ENCODE measurements at regions of chr5 and their contacts with region 1.

Region 1: GRCh38 chr5:69166686-69167492 is at the start of gene CCNB1:
- DNase-seq: peak; percentile 97 to 99
- ATAC-seq: peak; percentile 100
- H3K4me3 ChIP-seq: peak within 1 kb of the TSS; percentile 77
- H3K27ac ChIP-seq: peak within 1 kb of the TSS; percentile 62
- H3K4me1 ChIP-seq: peaks cover 7% of the 10 kb centered on the region
- H3K27me3 ChIP-seq: no peaks in the 10 kb centered on the region
- CTCF ChIP-seq: no peak
- total RNA-seq, gene CCNB1: 1.8 to 4.1 (median 2.3) TPM

Region 2: DNA sequence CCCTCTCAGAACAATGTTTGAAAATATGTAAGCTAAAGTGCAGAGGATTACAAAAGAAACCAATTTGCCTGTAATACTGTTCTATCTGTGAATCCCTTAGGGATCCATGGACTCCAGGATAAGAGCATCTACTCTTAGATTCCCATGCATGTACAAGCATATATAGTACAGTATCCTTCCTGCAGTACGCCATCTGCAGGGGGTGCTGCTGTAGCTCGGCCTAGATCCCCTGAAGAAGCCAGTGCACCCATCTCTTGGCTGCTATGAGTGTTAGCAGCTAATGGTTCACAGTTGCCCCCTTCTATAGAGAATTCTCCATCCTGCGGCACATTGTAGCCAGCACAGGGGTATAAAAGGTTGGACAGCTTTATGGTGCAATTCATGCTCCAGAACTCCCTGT is 134.9 kb before region 1 on chr5:
- intact Hi-C with region 1: loop called in 1 of 2 experiments (anchors 10 kb)
- DNase-seq: no peak
- ATAC-seq: no peak
- H3K4me3 ChIP-seq: no peak overlapping the region
- H3K27ac ChIP-seq: no peak overlapping the region
- H3K4me1 ChIP-seq: no peaks in the 10 kb centered on the region
- H3K27me3 ChIP-seq: no peaks in the 10 kb centered on the region
- CTCF ChIP-seq: no peak

Region 3: DNA sequence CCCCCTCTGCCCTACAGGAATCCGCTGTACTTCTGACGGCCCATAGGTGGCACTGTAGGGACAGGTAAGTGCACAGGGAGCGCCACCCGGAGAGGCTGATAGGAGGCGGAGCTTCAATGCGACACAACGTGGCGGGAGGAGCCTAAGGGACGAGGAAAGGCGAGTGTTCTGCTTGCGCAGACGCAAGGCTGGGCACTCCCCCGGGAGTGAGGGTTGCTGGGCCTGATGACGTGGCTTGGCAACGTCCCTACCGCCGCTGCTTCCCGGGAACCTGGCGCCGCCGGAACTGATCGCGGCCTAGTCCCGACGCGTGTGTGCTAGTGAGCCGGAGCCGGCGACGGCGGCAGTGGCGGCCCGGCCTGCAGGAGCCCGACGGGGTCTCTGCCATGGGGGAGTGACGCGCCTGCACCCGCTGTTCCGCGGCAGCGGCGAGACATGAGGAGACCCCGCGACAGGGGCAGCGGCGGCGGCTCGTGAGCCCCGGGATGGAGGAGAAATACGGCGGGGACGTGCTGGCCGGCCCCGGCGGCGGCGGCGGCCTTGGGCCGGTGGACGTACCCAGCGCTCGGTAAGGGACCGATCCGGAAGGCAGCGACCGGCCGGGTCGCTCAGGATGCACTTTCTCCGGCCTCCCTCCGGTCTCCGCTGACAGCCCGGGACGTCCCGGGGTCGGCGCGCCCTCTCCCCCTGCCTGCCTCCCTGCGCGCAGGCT is 73.0 kb before region 1 on chr5 and contains the start of gene SLC30A5:
- intact Hi-C with region 1: loop called in 1 of 2 experiments (anchors 10 kb)
- DNase-seq: peak; percentile 99 to 100
- ATAC-seq: peak; percentile 99 to 100 (median 100)
- H3K4me3 ChIP-seq: peak within 1 kb of the TSS; percentile 94
- H3K27ac ChIP-seq: peak within 1 kb of the TSS; percentile 97
- H3K4me1 ChIP-seq: peaks cover 9% of the 10 kb centered on the region
- H3K27me3 ChIP-seq: no peaks in the 10 kb centered on the region
- CTCF ChIP-seq: peak; percentile 90
- total RNA-seq, gene SLC30A5: 14.2 to 21.1 (median 17.4) TPM

Measured in psoas muscle (tissue), 8 donors.